Esophagus muscularis mucosa (tissue), 4 donors: ENCODE measurements at regions of chr20 and their contacts with region 1.

Region 1: DNA sequence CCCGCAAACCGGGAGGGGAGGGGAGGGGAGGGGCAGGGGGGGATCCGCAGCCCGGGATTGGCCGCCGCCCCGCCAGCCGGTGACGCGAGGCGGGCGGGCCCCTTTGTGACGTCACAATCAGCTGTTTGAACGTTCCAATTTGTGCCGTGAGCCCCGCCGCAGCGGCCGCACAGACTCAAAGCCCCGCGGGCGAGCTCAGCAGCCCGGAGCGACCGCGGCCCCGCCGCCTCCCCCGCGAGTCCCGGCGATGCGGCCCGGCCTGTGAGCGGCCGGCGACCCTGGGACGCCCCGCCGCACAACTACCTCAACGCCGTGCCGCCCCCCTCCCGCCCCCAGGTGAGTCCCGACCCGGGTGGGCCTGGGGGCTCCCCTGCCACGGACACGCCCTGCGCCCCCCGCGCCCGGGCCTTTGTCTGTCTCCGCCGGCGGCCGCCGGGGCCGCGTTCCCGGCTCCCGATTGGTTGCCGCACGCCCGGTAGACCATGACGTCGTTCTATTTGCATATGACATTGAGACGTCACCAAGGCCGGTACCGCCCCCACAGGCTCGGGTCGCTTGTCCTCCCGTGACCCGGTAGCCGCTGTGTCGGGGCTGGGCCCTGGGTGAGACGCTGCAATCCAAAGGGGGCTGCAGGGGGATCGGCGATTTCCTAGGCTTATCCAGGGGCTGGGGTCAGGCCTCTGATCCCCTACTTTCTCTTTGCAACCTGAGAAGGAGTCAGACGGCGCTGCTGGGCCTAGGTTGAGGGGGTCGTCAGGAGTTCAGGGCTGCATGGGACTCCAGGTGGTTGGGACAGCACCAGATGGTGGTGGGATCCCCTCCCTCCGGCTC is at the start of gene TP53INP2:
- DNase-seq: peak; percentile 99
- H3K4me3 ChIP-seq: peak within 1 kb of the TSS; percentile 69 to 97 (median 90)
- H3K27ac ChIP-seq: peak within 1 kb of the TSS; percentile 98 to 100 (median 100)
- H3K4me1 ChIP-seq: peaks cover 37 to 54% (median 48%) of the 10 kb centered on the region in 4 donors
- H3K27me3 ChIP-seq: no peaks in the 10 kb centered on the region
- CTCF ChIP-seq: peak in 1 of 3 experiments; percentile 11
- EP300 ChIP-seq: peak; percentile 10
- POLR2A ChIP-seq: peak; percentile 57
- total RNA-seq, gene TP53INP2: 37.1 to 73.1 (median 62.5) TPM

Region 2: DNA sequence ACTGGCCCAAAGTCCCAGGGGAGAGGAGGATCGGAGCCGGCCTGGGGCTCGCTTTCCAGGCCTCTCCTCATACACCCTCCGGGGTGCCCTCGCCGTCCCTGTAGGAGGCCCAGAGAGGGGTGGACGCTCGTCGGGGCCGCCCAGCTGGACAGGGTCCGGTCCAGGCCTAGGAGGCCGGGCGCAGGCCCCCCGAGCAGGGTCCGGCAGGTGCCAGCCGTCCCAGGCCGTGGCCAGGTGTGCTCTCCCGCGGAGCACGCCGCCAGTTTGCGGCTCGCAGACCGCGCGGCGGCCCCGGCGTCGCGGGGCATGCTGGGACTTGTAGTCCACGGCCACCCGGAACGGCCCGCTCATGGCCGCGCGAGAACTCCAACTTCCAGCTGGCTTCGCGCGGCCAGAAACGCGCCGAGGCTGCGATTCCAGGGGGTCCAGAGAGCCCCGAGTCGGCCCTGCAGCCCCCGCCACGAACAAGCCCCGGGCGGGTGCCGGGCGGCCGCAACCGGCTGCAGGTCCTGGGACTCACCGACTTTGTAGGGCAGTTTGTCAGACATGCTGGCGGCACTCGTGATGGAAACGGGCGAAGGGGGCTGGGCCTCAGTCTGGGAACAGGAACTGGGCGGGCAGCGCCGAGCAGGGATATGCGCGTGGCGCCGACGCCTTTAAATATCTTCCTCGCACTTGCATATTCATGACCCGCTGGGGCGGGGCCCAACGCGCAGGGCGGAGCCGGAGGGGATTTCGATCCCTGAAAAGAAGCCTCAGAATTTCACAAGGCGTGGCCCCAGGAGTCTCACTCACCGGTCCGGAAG is 401.5 kb before region 1 on chr20 and contains the start of gene AHCY:
- intact Hi-C with region 1: loop called (anchors 10 kb)
- DNase-seq: peak; percentile 99
- H3K4me3 ChIP-seq: peak within 1 kb of the TSS; percentile 73 to 86 (median 77)
- H3K27ac ChIP-seq: peak within 1 kb of the TSS; percentile 88 to 97 (median 92)
- H3K4me1 ChIP-seq: peaks cover 16 to 25% (median 20%) of the 10 kb centered on the region in 4 donors
- H3K27me3 ChIP-seq: no peaks in the 10 kb centered on the region
- CTCF ChIP-seq: peak in 1 of 3 experiments; percentile 3
- EP300 ChIP-seq: no peak
- POLR2A ChIP-seq: peak; percentile 43
- total RNA-seq, gene AHCY: 52.7 to 77.0 (median 71.0) TPM

Region 3: GRCh38 chr20:34562643-34563042 is 141.7 kb before region 1 on chr20:
- intact Hi-C with region 1: loop called (anchors 5 kb)
- DNase-seq: no peak
- H3K4me3 ChIP-seq: no peak overlapping the region
- H3K27ac ChIP-seq: no peak overlapping the region
- H3K4me1 ChIP-seq: peaks cover 13 to 20% (median 18%) of the 10 kb centered on the region in 4 donors
- H3K27me3 ChIP-seq: peaks cover 0 to 3% (median 0%) of the 10 kb centered on the region in 4 donors
- CTCF ChIP-seq: peak in 1 of 3 experiments; percentile 43
- EP300 ChIP-seq: no peak
- POLR2A ChIP-seq: no peak

Region 4: GRCh38 chr20:34579191-34579978 is 125.0 kb before region 1 on chr20:
- intact Hi-C with region 1: loop called (anchors 5 kb)
- DNase-seq: peak; percentile 90
- H3K4me3 ChIP-seq: no peak overlapping the region
- H3K27ac ChIP-seq: peak overlapping the region in 2 of 4 donors; percentile 10 to 37
- H3K4me1 ChIP-seq: peaks cover 22 to 43% (median 31%) of the 10 kb centered on the region in 4 donors
- H3K27me3 ChIP-seq: no peaks in the 10 kb centered on the region
- CTCF ChIP-seq: peak; percentile 61 to 79 (median 62)
- EP300 ChIP-seq: no peak
- POLR2A ChIP-seq: no peak